Activated naive CD4-positive, alpha-beta T cell treated with anti-CD3 and anti-CD28 coated beads, Interleukin-2, amount 10 ng/mL, durations not matched to agents 7 days and 5 days (primary cell): ENCODE measurements at regions of chr11 and their contacts with region 1.

Region 1: GRCh38 chr11:17528181-17528691 is 16.0 kb downstream of the USH1C start:
- DNase-seq: peak; percentile 65
- H3K4me3 Mint-ChIP-seq: no peak overlapping the region
- H3K27ac Mint-ChIP-seq: no peak overlapping the region
- H3K4me1 Mint-ChIP-seq: no peaks in the 10 kb centered on the region
- H3K27me3 Mint-ChIP-seq: peaks cover 24% of the 10 kb centered on the region

Region 2: DNA sequence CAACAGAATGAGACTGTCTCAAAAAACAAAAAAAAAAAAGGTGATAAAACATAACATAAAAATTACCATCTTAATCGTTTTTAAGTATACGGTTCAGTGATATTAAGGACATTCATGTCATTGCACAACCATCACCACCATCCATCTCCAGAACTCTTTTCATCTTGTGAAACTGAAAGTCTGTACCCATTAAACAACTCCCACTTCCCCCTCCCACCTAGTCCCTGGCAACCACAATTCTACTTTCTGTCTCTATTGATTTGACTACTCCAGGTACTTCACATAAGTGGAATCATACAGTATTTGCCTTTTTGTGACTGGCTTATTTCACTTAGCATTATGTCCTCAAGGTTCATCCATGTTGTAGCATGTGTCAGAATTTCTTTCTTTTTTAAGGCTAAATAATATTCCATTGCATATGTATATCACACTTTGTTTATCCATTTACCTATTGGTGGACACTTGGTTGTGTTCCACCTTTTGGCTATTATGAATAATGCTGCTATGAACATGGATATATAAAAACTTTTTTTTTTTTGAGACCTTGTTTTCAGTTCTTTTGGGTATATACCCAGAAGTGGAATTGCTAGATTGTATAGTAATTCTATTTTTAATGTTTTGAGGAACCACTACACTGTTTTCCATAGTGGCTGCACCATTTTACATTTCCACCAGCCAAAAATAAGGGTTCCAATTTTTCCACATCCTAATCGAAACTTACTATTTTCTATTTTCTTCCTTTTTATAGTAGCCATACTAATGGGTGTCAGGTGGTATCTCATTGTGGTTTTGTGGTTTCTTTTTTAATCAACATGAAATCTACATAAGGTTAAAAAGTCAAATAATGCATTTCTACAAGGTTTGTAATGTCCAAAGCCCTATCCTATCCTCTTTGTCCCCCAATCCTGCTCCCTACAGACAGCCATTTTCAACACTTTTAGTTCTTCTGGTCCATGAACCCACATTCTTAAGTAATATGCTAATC is 297.1 kb before region 1 on chr11:
- CTCF ChIA-PET with region 1: interaction called, 11 read pairs
- DNase-seq: peak; percentile 61
- H3K4me3 Mint-ChIP-seq: no peak overlapping the region
- H3K27ac Mint-ChIP-seq: peak overlapping the region; percentile 34
- H3K4me1 Mint-ChIP-seq: peaks cover 25% of the 10 kb centered on the region
- H3K27me3 Mint-ChIP-seq: peaks cover 37% of the 10 kb centered on the region

Region 3: GRCh38 chr11:17384002-17384511 is 144.2 kb before region 1 on chr11:
- CTCF ChIA-PET with region 1: interaction called, 49 read pairs
- DNase-seq: peak; percentile 86
- H3K4me3 Mint-ChIP-seq: no peak overlapping the region
- H3K27ac Mint-ChIP-seq: no peak overlapping the region
- H3K4me1 Mint-ChIP-seq: peaks cover 7% of the 10 kb centered on the region
- H3K27me3 Mint-ChIP-seq: peaks cover 48% of the 10 kb centered on the region

Region 4: DNA sequence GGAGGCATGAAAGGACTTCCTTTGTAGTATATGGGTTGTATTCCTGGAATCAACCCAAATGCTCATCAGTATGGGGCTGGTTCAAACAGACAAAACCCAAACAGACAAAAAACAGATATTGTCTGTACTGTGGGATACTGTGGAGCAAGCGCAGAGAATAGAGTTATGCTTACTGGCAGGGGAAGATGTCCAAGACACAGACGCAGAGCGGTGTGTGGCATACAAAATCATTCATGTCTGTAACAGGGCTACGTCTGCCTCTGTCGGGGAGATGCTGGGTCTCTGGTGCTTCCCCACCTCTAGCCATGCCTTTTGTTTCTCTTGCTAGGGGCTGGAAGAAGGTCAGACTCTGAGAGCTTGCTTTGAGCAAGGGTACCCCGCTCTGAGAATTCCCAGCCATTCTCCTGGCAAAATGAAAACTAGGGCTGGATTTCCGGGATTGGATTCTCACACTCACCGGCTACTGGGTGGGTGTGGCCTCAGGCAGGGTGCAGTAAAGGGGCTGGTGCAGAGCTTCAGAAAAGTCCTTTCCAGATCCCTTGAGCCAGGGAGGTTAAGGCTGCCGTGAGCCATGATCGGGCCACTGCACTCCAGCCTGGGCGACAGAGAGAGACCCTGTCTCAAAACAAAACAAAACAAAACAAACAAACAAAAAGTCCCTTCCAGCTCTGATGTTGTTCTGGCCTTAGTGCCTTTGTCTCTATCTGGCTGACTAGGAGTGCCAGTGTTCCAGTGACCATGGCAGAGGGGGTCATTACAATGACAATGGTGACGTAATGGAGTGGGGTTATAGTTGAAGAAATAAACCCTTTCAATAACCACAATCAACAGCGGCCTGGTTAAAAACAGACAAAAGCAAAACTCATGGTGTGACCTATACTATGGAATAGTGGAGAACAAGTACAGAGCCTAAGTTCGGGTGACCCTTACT is 48.7 kb before region 1 on chr11:
- CTCF ChIA-PET with region 1: no interaction called
- DNase-seq: no peak
- H3K4me3 Mint-ChIP-seq: no peak overlapping the region
- H3K27ac Mint-ChIP-seq: no peak overlapping the region
- H3K4me1 Mint-ChIP-seq: peaks cover 12% of the 10 kb centered on the region
- H3K27me3 Mint-ChIP-seq: peaks cover 77% of the 10 kb centered on the region

Region 5: DNA sequence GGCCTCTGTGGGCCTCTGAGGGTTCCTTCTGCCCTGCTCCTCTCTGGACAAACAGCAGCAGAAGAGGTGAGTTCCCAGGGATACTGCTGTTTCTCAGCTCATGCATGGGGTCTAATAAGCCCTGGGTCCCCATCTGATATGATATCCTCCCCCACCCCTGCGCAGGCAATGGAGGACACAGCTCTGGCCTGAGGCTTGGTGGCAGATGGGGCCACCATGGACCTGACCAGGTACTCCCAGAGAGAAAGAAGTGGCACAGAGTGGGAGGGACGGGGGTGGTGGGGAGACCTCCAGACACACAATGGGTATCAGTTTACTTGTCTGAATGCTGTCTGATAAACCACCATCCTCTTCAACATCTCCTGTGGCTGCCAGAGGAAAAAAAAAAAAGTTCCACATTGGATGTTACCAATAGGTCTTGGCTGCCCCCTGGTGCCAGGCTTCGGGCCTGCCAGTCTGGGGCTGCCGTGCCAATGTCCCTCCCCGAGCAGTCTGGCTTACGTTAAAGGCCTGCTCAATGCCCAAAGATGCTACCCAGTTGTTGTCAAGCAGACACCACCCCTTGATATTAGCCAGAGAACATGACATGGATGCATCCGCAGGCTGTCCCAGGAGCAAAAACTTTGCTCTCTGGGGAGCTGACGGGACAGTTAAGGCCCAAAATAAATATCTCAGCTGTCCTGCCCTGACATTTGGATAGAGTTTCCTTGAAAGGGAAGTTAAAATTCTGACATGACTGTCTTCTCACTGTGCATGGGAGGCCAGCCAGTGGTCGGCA is 23.7 kb before region 1 on chr11:
- CTCF ChIA-PET with region 1: interaction called, 31 read pairs
- DNase-seq: peak; percentile 88
- H3K4me3 Mint-ChIP-seq: no peak overlapping the region
- H3K27ac Mint-ChIP-seq: no peak overlapping the region
- H3K4me1 Mint-ChIP-seq: no peaks in the 10 kb centered on the region
- H3K27me3 Mint-ChIP-seq: peaks cover 39% of the 10 kb centered on the region

Region 6: DNA sequence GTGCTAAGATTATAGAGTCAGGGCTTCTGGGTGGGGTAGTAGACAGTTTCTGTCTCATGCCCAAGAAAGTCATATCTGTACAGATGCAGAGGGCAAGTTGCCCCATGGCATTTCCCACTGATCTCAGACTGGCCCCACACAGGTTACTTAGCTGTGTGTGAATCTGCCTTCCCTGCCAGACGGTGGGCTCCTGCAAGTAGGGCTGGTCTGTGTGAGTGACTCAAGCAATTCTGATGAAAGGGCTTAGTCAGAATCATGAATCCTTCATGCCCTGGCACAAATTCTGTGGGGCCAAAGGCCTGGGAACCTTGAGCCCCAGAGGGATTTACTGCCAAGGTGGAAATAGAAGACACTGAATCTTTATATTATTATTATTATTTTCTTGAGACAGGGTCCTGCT is 14.4 kb before region 1 on chr11:
- CTCF ChIA-PET with region 1: interaction called, 31 read pairs
- DNase-seq: no peak
- H3K4me3 Mint-ChIP-seq: no peak overlapping the region
- H3K27ac Mint-ChIP-seq: no peak overlapping the region
- H3K4me1 Mint-ChIP-seq: no peaks in the 10 kb centered on the region
- H3K27me3 Mint-ChIP-seq: peaks cover 56% of the 10 kb centered on the region

Region 7: DNA sequence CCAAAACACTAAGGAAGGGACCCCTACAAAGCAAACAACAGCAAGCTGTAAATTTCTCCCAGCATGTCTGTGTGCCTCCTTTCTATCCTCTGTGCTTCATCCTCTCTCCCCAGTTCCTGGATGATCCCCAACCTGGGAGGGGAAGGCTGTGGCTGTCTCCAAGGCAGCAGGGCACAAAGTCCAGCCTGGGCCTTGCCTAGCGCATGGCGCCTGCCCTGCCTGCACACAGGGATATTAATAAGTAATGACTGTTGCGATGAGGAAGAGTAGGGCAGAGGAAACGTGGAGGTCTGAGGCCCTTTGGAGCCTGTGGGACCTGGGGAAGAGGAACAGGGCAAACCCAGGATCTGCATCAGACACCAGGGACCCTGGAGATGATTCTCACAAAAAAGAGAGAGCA is 14.0 kb after region 1 on chr11:
- CTCF ChIA-PET with region 1: interaction called, 16 read pairs
- DNase-seq: no peak
- H3K4me3 Mint-ChIP-seq: no peak overlapping the region
- H3K27ac Mint-ChIP-seq: no peak overlapping the region
- H3K4me1 Mint-ChIP-seq: peaks cover 2% of the 10 kb centered on the region
- H3K27me3 Mint-ChIP-seq: peaks cover 68% of the 10 kb centered on the region

Region 8: DNA sequence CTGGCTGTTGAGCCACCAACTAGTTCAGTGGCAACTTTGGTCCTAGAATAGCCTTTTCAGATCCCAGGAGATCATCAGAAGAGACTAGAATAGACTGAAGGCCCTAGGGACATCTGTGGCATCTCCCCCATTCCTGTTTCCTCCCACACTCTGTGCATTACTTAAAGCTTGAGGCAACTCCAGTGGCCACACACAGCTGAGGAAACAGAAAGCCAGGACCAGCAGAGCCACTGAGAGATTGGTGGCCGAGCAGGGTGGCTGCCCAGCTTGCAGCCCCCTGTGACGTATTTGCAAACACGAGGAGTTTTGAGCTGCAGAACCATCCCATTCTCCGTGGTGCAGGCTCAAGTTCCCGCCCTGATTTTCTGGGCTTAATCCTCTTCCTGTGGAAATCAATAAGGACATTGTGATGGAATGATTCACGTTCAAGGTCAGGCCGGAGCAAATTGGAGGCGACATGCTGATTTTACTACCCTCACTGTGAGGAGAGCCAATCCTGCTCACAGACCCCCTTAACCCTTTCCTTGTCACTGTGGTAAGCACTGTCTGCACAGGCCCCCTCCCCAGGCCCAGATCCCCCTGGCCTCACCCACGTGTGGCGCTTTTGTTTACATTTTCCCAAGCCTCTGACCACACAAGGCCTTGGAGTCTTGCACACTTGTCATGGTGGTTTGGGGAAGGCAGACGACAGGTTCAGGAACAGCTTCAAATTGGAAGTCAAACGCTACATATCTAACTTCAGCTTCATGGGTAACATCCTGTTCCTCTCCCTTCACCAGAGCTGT is 122.1 kb after region 1 on chr11:
- CTCF ChIA-PET with region 1: no interaction called
- DNase-seq: no peak
- H3K4me3 Mint-ChIP-seq: no peak overlapping the region
- H3K27ac Mint-ChIP-seq: no peak overlapping the region
- H3K4me1 Mint-ChIP-seq: no peaks in the 10 kb centered on the region
- H3K27me3 Mint-ChIP-seq: peaks cover 49% of the 10 kb centered on the region

Region 9: DNA sequence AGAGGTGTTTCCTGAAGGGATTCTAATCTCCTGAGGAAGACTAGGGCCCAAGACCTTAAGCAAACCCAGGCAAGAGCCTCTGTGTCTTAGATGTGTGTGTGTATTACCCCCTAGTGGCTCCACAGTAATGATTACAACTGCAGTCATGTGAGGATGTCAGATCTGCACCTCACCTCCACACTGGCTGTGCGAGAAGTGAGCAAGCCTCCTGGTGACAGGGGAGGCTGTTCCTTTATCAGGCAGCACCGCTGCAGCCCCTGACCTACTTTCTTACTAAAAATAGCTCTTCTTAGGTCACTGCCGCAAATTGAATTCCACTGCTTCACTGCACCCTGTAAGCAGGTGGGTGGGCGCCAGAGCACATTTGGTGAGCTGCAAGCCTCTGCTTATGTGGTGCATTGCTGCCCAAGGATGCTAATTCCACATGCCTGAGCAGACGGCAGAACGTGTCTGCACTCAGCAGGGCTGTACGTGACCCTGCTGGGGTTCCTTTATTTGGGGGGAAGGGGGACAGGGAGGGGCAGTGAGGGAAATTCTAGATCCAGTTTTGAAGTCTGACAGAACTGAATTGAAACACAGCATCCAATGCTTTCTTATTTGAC is 318.7 kb after region 1 on chr11:
- CTCF ChIA-PET with region 1: no interaction called
- DNase-seq: no peak
- H3K4me3 Mint-ChIP-seq: no peak overlapping the region
- H3K27ac Mint-ChIP-seq: no peak overlapping the region
- H3K4me1 Mint-ChIP-seq: no peaks in the 10 kb centered on the region
- H3K27me3 Mint-ChIP-seq: no peaks in the 10 kb centered on the region